PC-9 (cell line): ENCODE measurements at regions of chr7 and their contacts with region 1.

Region 1: GRCh38 chr7:17109017-17109416 is 189.4 kb upstream of the AHR start:
- DNase-seq: peak in 1 of 2 experiments; percentile 88
- H3K4me3 ChIP-seq: no peak overlapping the region
- H3K27ac ChIP-seq: 0 out of 2 replicates have a peak overlapping the region, but pooled peaks have one; percentile 2
- H3K4me1 ChIP-seq: peaks cover 14% of the 10 kb centered on the region
- H3K27me3 ChIP-seq: no peaks in the 10 kb centered on the region
- CTCF ChIP-seq: no peak

Region 2: GRCh38 chr7:17123020-17123419 is 14.0 kb after region 1 on chr7:
- CTCF ChIA-PET with region 1: no interaction called
- POLR2A ChIA-PET with region 1: no interaction called
- intact Hi-C with region 1: no loop called
- DNase-seq: peak in 1 of 2 experiments; percentile 44
- H3K4me3 ChIP-seq: no peak overlapping the region
- H3K27ac ChIP-seq: no peak overlapping the region
- H3K4me1 ChIP-seq: 0 out of 2 replicates have a peak, but pooled peaks cover 7% of the 10 kb centered on the region
- H3K27me3 ChIP-seq: no peaks in the 10 kb centered on the region
- CTCF ChIP-seq: no peak

Region 3: GRCh38 chr7:17640730-17641377 is 531.8 kb after region 1 on chr7:
- CTCF ChIA-PET with region 1: no interaction called
- POLR2A ChIA-PET with region 1: interaction called, 10 read pairs
- intact Hi-C with region 1: no loop called
- DNase-seq: no peak
- H3K4me3 ChIP-seq: no peak overlapping the region
- H3K27ac ChIP-seq: no peak overlapping the region
- H3K4me1 ChIP-seq: no peaks in the 10 kb centered on the region
- H3K27me3 ChIP-seq: no peaks in the 10 kb centered on the region
- CTCF ChIP-seq: peak; percentile 94